ENCODE measurements at regions of chr17 and their contacts with region 1.

Region 1: DNA sequence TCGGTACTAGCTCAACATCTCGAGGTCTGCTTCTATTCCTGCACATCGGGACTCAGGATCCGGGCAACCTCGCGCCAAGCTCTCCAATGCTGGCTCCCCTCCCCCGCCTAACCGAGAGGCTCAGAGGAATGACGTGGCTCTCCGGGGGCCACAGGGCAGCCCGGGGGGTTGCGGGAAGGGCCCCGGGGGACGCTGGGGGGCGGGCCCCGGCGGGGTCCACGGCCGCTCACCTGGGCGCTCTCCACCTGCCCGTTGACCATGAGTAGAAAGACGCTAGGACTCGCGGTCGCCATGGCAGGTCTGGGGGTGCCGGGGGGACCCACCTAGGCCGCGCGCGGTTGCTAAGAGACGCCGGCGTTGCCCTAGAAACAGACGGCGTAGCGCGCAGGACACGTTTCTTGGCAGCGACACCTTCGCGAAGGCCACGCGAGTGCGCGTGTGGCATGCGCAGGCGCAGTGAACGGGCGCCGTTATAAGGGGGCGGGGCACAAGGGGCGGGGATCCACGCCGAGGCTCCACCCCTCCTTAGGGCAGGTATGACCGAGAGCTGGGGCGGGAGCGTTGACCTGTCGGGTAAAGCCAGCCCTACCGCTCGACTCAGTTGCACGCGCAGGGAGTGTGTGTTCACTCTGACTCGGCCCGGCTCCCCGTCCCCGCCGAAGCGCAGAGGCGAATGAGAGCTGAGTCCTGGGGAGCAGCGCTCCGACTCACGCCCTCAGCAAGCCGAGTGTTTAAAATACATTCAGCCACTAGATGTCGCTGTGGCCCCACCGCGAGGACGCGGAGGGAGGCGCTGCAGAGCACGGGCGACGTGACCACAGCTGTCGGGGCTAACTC is at the start of gene B9D1:
- DNase-seq: peak; percentile 73
- ATAC-seq: peak; percentile 95
- H3K4me3 ChIP-seq: peak within 1 kb of the TSS; percentile 85
- H3K27ac ChIP-seq: no peak within 1 kb of the TSS
- H3K4me1 ChIP-seq: peaks cover 7% of the 10 kb centered on the region
- H3K27me3 ChIP-seq: no peaks in the 10 kb centered on the region; a peak in 2 of 4 replicates
- CTCF ChIP-seq: peak; percentile 91 to 99 (median 92)
- EP300 ChIP-seq: no peak
- POLR2A ChIP-seq: peak; percentile 53
- RAD21 ChIP-seq: peak; percentile 93
- polyA plus RNA-seq, gene B9D1: 8.2 to 10.2 TPM

Region 2: DNA sequence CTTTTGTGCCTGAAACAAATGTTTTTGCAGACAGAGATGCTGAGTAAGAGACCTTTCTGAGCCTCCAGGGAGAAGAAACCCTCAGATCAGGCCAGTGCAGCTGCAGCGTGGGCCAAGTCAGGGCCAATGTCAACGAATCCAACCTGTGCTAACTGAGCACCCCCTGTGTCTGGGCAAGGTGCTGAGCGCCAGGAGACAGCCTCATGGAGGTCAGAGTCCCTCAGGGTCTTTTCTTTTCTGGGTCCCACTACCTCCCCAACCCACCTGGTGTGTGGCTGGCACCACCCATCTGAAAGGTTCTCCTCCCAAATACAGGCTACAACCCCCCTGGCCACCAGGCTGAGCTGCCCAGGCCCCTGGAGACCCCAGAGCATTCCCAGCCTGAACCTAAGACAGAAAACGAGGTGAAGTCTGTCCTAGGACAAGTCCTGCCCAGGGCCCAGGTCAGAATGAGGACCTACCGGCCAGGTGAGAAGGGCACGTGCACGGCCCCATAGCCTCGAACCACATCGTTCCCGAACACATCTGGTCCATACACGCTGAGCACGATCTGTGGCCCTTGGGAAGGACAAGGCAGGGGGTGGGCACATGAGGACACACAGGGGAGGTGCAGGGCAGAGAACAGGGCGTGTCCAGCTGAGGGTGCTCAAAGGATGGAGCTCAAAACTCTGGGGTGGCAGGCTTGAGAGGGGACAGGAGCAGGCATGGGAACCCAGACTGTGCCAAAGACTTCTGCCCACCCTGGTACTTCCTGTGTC is 15.0 kb before region 1 on chr17:
- CTCF ChIA-PET with region 1: no interaction called
- POLR2A ChIA-PET with region 1: no interaction called
- RAD21 ChIA-PET with region 1: no interaction called
- SMC1A ChIA-PET with region 1: no interaction called
- in situ Hi-C with region 1: no loop called
- intact Hi-C with region 1: no loop called
- DNase-seq: no peak
- ATAC-seq: no peak
- H3K4me3 ChIP-seq: no peak overlapping the region
- H3K27ac ChIP-seq: no peak overlapping the region
- H3K4me1 ChIP-seq: no peaks in the 10 kb centered on the region
- H3K27me3 ChIP-seq: no peaks in the 10 kb centered on the region
- CTCF ChIP-seq: no peak
- EP300 ChIP-seq: no peak
- POLR2A ChIP-seq: no peak
- RAD21 ChIP-seq: no peak

Region 3: GRCh38 chr17:19398301-19399181 is 36.0 kb after region 1 on chr17:
- CTCF ChIA-PET with region 1: interaction called, 11 read pairs
- POLR2A ChIA-PET with region 1: no interaction called
- RAD21 ChIA-PET with region 1: interaction called, 7 read pairs
- SMC1A ChIA-PET with region 1: interaction called, 3 read pairs
- in situ Hi-C with region 1: no loop called
- intact Hi-C with region 1: no loop called
- DNase-seq: no peak
- ATAC-seq: no peak
- H3K4me3 ChIP-seq: no peak overlapping the region
- H3K27ac ChIP-seq: no peak overlapping the region
- H3K4me1 ChIP-seq: peaks cover 4% of the 10 kb centered on the region; the same call in 1 of the 2 replicates
- H3K27me3 ChIP-seq: no peaks in the 10 kb centered on the region; a peak in 1 of 4 replicates
- CTCF ChIP-seq: no peak
- EP300 ChIP-seq: no peak
- POLR2A ChIP-seq: no peak
- RAD21 ChIP-seq: no peak

Region 4: DNA sequence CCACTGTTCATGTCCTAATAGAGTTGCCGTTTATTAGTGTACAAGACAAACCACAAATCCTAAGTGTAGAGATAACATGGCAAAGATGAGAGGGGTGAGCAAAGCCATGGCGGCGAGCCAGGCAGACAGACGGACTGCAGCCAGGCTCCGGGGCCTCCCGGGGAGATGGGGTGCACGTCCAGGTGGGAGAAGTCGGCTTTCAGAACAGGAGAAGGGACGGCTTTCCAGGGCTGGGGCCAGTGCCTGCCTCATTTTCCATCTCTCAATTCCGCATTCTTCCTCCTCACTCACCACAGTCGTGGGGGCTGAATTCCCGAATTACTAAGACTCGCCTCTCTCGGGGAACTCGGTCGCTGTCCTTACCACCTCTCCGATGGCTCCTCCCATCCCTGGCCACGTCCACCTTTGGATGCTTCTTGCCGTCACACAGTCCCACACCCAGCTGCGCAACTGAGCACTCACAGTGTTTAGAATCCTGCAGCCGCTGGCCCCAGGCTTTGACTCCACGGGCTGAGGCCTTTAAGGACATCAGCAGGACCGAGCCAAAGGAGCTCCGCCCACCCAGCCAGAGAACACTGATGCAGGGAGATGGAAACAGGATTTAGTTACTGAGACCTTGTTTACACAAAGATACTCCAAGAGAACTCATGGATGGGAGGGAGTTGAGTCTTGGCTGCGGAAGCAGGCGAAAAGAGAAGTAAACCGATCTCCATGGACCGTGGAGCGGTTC is 108.2 kb after region 1 on chr17:
- CTCF ChIA-PET with region 1: interaction called, 8 read pairs
- POLR2A ChIA-PET with region 1: no interaction called
- RAD21 ChIA-PET with region 1: no interaction called
- SMC1A ChIA-PET with region 1: no interaction called
- in situ Hi-C with region 1: no loop called
- intact Hi-C with region 1: loop called (anchors 1 kb)
- DNase-seq: no peak
- ATAC-seq: no peak
- H3K4me3 ChIP-seq: no peak overlapping the region
- H3K27ac ChIP-seq: no peak overlapping the region
- H3K4me1 ChIP-seq: no peaks in the 10 kb centered on the region
- H3K27me3 ChIP-seq: no peaks in the 10 kb centered on the region
- CTCF ChIP-seq: no peak
- EP300 ChIP-seq: no peak
- POLR2A ChIP-seq: no peak
- RAD21 ChIP-seq: no peak

Region 5: DNA sequence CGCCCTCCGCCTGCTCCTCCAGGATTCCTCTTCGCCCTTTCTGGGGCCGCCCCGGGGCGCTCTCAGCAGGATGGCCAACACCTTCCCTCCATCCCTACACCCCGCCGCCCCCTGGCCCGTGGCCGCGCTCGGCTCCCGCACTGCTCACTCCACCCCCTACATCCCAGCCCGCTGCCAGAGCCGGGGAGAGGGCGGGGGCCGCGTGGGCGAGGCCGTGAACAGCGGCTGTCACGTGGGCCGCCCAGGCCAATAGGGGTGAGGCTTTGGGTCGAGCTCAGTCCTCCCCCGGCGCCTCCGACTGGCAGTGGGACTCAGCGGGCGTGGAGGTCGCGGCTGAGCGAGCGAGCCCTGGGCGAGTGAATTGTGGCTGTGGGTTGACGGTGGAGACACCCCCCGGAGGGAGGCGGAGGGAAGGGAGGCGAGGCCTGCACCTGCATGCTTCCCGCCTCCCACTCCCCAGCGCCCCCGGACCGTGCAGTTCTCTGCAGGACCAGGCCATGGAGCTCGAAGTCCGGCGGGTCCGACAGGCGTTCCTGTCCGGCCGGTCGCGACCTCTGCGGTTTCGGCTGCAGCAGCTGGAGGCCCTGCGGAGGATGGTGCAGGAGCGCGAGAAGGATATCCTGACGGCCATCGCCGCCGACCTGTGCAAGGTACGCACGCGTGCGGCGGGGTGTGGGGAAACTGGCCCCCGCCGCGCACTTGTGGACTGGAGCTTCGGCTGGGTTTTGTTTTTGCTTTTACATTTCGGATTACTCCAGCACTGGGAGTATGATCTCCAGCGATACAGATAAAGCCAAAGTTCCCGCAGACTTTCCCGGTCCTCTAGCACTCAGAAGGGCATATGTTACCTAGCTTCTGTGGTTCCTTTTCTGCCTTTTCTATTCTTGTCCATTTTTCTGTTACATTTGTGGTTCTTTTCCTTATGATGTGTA is 286.2 kb after region 1 on chr17 and contains the start of gene ALDH3A2:
- CTCF ChIA-PET with region 1: interaction called, 5 read pairs
- POLR2A ChIA-PET with region 1: no interaction called
- RAD21 ChIA-PET with region 1: interaction called, 3 read pairs
- SMC1A ChIA-PET with region 1: no interaction called
- in situ Hi-C with region 1: no loop called
- intact Hi-C with region 1: loop called (anchors 10 kb)
- DNase-seq: peak; percentile 68
- ATAC-seq: peak; percentile 98
- H3K4me3 ChIP-seq: peak within 1 kb of the TSS; percentile 65
- H3K27ac ChIP-seq: peak within 1 kb of the TSS; percentile 74
- H3K4me1 ChIP-seq: peaks cover 8% of the 10 kb centered on the region; the same call in 1 of the 2 replicates
- H3K27me3 ChIP-seq: no peaks in the 10 kb centered on the region
- CTCF ChIP-seq: 0 out of 6 replicates have a peak, but pooled peaks of 1 of the 3 experiments have one; percentile 11
- EP300 ChIP-seq: no peak
- POLR2A ChIP-seq: peak; percentile 95
- RAD21 ChIP-seq: no peak
- polyA plus RNA-seq, gene ALDH3A2: 5.0 to 7.9 TPM